PC-9 (cell line): ENCODE measurements at regions of chr7 and their contacts with region 1.

Region 1: GRCh38 chr7:51288896-51289622 is 27.6 kb downstream of the COBL start:
- DNase-seq: peak in 1 of 2 experiments; percentile 52
- H3K4me3 ChIP-seq: no peak overlapping the region
- H3K27ac ChIP-seq: no peak overlapping the region
- H3K4me1 ChIP-seq: peaks cover 21% of the 10 kb centered on the region
- H3K27me3 ChIP-seq: no peaks in the 10 kb centered on the region
- CTCF ChIP-seq: no peak

Region 2: DNA sequence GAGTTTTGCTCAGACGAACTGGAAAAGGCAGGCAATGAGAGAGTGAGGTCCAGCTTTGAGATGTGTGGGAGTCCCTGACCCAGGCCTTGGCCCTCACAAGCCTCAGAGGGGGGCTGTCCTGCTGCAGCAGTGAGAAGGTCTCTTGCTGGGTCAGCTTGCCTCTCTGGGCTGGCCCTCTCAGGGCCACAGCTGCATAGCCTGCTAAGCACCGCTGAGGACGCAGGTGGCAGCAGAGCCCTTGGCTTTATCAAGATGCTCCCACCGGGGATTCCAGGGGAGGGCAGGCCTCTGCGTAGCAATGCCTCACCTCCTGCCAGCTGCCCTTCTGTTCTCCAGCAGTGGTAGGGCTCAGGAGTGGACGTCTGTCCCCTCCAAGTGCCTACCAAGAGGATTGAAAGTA is 101.1 kb before region 1 on chr7:
- CTCF ChIA-PET with region 1: no interaction called
- POLR2A ChIA-PET with region 1: no interaction called
- intact Hi-C with region 1: no loop called
- DNase-seq: no peak
- H3K4me3 ChIP-seq: no peak overlapping the region
- H3K27ac ChIP-seq: no peak overlapping the region
- H3K4me1 ChIP-seq: no peaks in the 10 kb centered on the region
- H3K27me3 ChIP-seq: no peaks in the 10 kb centered on the region
- CTCF ChIP-seq: no peak

Region 3: DNA sequence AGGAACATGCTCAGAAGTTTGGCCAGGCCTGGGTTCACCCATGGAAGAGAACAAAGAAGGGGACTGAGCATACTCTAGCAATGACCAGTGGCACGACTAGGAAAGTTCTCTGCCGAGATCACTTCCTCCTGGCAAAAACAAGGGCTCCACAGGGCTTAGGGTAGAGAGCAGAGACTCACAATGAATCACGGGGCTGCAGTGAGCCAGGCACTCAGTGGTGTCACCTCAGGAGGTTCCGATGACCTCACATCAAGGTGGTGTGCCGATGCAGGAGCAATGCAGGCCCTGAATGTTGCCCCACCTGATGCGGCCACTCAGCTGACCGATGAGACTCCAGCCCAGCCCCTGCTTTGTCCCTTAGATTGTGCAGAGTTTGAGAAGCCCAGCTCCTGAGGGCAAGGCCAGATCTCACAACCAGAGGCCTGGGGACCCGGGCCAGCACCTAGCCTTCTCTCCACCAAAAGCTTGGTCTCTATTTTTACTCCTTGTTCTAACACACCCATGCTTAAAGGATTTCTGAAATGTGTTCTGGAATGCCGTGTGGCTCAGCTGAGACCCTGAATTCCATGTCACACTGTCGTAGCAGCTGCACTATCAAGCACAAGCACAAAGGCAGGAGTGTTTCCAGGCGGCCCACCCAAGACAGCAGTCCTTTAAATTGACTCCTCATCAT is 33.4 kb before region 1 on chr7:
- CTCF ChIA-PET with region 1: interaction called, 3 read pairs
- POLR2A ChIA-PET with region 1: interaction called, 19 read pairs
- intact Hi-C with region 1: no loop called
- DNase-seq: peak; percentile 49 to 73
- H3K4me3 ChIP-seq: no peak overlapping the region
- H3K27ac ChIP-seq: no peak overlapping the region
- H3K4me1 ChIP-seq: peaks cover 23% of the 10 kb centered on the region
- H3K27me3 ChIP-seq: no peaks in the 10 kb centered on the region
- CTCF ChIP-seq: no peak

Region 4: GRCh38 chr7:51299391-51300133 is 10.5 kb after region 1 on chr7:
- CTCF ChIA-PET with region 1: no interaction called
- POLR2A ChIA-PET with region 1: no interaction called
- intact Hi-C with region 1: loop called (anchors 2 kb)
- DNase-seq: no peak
- H3K4me3 ChIP-seq: no peak overlapping the region
- H3K27ac ChIP-seq: no peak overlapping the region
- H3K4me1 ChIP-seq: peaks cover 37% of the 10 kb centered on the region
- H3K27me3 ChIP-seq: no peaks in the 10 kb centered on the region
- CTCF ChIP-seq: no peak; the same call in 1 of the 2 replicates

Region 5: GRCh38 chr7:51376420-51377092 is 87.5 kb after region 1 on chr7:
- CTCF ChIA-PET with region 1: no interaction called
- POLR2A ChIA-PET with region 1: no interaction called
- intact Hi-C with region 1: no loop called
- DNase-seq: peak; percentile 59 to 100
- H3K4me3 ChIP-seq: no peak overlapping the region
- H3K27ac ChIP-seq: peak overlapping the region; percentile 80
- H3K4me1 ChIP-seq: peaks cover 21% of the 10 kb centered on the region
- H3K27me3 ChIP-seq: no peaks in the 10 kb centered on the region
- CTCF ChIP-seq: no peak